Dendritic cell treated with granulocyte-macrophage colony-stimulating factor and Interleukin-4, amounts not matched to agents 40 ng/mL and 50 ng/mL, for 4 days (primary cell): ENCODE measurements at regions of chr4 and their contacts with region 1.

Region 1: GRCh38 chr4:17544205-17544604 is 29.2 kb downstream of the CLRN2 start:
- H3K4me3 Mint-ChIP-seq: no peak overlapping the region
- H3K27ac Mint-ChIP-seq: no peak overlapping the region
- H3K4me1 Mint-ChIP-seq: peaks cover 12% of the 10 kb centered on the region
- H3K27me3 Mint-ChIP-seq: no peaks in the 10 kb centered on the region

Region 2: DNA sequence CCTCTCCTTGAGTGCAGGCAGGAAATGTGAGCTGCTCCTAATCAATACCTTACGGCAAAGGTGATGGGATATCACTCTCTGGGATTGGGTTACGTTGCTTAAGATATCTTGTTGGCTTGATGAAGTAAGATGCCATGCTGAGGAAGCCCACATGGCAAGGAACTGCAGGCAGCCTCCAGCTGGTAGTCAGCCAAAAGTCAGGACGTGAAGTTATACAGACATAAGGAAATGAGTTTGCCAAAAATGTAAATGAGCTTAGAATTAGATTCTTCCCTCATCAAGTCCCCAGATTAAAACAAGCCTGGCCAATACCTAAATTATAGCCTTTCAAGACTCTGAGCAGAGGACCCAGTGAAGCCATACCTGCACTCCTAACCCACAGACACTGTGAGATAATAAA is 187.3 kb before region 1 on chr4:
- intact Hi-C with region 1: no loop called
- H3K4me3 Mint-ChIP-seq: no peak overlapping the region
- H3K27ac Mint-ChIP-seq: no peak overlapping the region
- H3K4me1 Mint-ChIP-seq: no peaks in the 10 kb centered on the region
- H3K27me3 Mint-ChIP-seq: no peaks in the 10 kb centered on the region

Region 3: DNA sequence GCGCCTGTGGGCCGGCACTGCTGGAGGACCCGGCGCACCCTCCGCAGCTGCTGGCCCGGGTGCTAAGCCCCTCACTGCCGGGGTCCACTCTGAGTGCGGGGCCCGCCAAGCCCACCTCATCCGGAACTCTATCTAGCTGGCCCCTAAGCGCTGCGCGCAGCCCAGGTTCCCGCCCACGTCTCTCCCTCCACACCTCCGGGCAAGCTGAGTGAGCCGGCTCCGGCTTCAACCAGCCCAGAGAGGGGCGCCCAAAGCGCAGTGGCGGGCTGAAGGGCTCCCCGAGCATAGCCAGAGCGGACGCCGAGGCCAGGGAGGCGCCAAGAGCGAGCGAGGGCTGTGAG is 107.5 kb before region 1 on chr4:
- intact Hi-C with region 1: no loop called
- H3K4me3 Mint-ChIP-seq: no peak overlapping the region
- H3K27ac Mint-ChIP-seq: no peak overlapping the region
- H3K4me1 Mint-ChIP-seq: no peaks in the 10 kb centered on the region
- H3K27me3 Mint-ChIP-seq: no peaks in the 10 kb centered on the region

Region 4: GRCh38 chr4:17576932-17577665 is 32.9 kb after region 1 on chr4 and contains the start of gene LAP3:
- intact Hi-C with region 1: loop called (anchors 2 kb)
- H3K4me3 Mint-ChIP-seq: peak within 1 kb of the TSS; percentile 97
- H3K27ac Mint-ChIP-seq: peak within 1 kb of the TSS; percentile 98
- H3K4me1 Mint-ChIP-seq: peaks cover 43% of the 10 kb centered on the region
- H3K27me3 Mint-ChIP-seq: no peaks in the 10 kb centered on the region

Region 5: DNA sequence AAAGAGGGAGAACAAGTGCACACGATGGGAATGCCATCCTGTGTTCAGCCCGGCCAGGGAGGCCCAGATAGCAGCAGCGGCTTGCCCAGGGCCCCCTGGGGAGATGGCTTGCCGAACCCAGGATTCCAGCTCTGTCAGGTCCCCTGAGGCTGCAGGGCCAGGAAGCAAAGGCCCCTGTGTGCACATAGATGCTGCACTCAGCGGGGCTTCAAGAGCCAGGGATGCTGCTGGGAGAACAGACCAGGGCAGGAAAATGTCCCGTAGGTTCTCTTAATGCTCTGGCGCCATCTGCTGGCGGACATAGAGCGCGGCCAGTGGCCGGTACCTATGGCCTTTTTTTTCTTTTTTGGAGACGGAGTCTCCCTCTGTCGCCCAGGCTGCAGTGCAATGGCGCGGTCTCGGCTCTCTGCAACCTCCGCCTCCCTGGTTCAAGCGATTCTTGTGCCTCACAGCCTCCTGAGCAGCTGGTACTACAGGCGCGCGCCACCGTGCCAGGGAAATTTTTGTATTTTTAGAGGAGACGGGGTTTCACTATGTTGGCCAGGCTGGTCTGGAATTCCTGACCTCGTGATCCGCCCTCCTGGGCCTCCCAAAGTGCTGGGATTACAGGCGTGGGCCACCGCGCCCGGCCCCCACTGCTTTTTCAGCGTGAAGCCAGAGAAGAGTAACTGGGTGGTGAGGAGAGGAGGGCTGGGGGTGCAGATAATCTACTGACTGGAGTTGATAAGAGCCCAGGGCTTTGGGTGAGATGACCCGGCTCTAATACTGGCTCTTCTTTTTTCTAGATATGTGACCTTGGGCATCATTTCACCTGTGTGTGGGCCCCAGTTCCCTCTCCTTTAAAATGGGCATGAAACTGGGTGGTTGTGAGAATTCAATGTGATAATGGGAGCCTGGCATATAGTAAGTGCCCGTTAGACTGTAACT is 92.8 kb after region 1 on chr4:
- intact Hi-C with region 1: loop called (anchors 1 kb)
- H3K4me3 Mint-ChIP-seq: no peak overlapping the region
- H3K27ac Mint-ChIP-seq: no peak overlapping the region
- H3K4me1 Mint-ChIP-seq: peaks cover 11% of the 10 kb centered on the region
- H3K27me3 Mint-ChIP-seq: no peaks in the 10 kb centered on the region

Region 6: GRCh38 chr4:17810260-17811077 is 266.3 kb after region 1 on chr4 and contains the starts of genes DCAF16 and NCAPG:
- intact Hi-C with region 1: loop called (anchors 1 kb)
- H3K4me3 Mint-ChIP-seq: peak within 1 kb of the TSS; percentile 91
- H3K27ac Mint-ChIP-seq: peak within 1 kb of the TSS; percentile 94
- H3K4me1 Mint-ChIP-seq: peaks cover 56% of the 10 kb centered on the region
- H3K27me3 Mint-ChIP-seq: no peaks in the 10 kb centered on the region

Region 7: DNA sequence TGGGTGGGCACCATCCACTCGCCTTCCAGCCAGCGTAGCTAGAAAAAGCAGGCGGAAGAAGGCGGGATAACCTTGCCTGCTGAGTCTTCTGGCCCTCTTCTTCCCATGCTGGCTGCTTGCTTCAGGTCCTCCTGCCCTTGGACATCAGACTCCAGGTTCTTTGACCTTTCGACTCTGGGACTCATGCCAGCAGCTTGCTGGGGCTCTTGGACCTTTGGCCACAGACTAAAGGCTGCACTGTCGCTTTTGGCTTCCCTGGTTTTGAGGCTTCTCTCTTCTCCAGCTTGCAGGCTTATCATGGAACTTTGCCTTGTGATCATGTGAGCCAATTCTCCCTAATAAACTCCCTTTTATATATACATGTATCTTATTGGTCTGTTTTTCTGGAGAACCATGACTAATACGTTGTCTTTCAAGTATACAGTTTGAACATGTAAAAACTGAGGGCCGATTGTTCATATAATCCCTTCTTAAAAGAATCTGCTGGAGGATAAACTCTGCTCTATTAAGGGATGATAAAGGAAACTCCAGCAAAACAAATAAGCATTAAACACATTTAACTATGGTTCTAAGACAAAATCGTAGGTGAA is 594.0 kb after region 1 on chr4:
- intact Hi-C with region 1: no loop called
- H3K4me3 Mint-ChIP-seq: no peak overlapping the region
- H3K27ac Mint-ChIP-seq: no peak overlapping the region
- H3K4me1 Mint-ChIP-seq: no peaks in the 10 kb centered on the region
- H3K27me3 Mint-ChIP-seq: no peaks in the 10 kb centered on the region

Region 8: GRCh38 chr4:18366892-18367291 is 822.7 kb after region 1 on chr4:
- intact Hi-C with region 1: loop called (anchors 10 kb)
- H3K4me3 Mint-ChIP-seq: no peak overlapping the region
- H3K27ac Mint-ChIP-seq: no peak overlapping the region
- H3K4me1 Mint-ChIP-seq: no peaks in the 10 kb centered on the region
- H3K27me3 Mint-ChIP-seq: no peaks in the 10 kb centered on the region

Region 9: GRCh38 chr4:18593445-18594002 is 1049.3 kb after region 1 on chr4:
- intact Hi-C with region 1: loop called (anchors 1 kb)
- H3K4me3 Mint-ChIP-seq: no peak overlapping the region
- H3K27ac Mint-ChIP-seq: no peak overlapping the region
- H3K4me1 Mint-ChIP-seq: peaks cover 5% of the 10 kb centered on the region
- H3K27me3 Mint-ChIP-seq: no peaks in the 10 kb centered on the region